ENCODE measurements at regions of chr3 and their contacts with region 1.

Region 1: DNA sequence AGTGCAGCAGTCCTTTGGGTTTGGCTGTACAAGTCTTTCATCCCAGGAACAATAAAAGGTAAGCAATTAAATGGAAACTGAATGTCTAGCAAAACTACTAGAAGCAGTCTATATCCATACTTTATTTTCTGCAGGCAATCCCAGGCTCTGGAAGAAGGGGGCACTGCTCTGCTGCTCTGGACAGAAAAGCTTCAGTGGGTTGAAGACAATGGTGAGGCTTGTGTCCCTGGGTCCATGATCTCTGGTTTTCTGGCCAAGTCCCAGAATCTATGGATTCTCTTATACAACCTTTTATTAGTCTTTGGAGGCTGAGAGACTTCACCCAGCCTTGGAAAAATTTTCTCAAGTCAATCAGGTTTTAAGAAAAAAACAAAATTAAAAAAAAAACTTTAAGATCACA is 35.6 kb downstream of the SCAP start:
- DNase-seq: no peak
- ATAC-seq: no peak
- H3K4me3 ChIP-seq: no peak overlapping the region
- H3K27ac ChIP-seq: no peak overlapping the region
- H3K4me1 ChIP-seq: peaks cover 0 to 24% (median 17%) of the 10 kb centered on the region in 9 donors
- H3K27me3 ChIP-seq: no peaks in the 10 kb centered on the region
- CTCF ChIP-seq: peak in 4 of 9 donors; percentile 13 to 27 (median 19)

Region 2: GRCh38 chr3:47420511-47421484 is 19.3 kb before region 1 on chr3:
- intact Hi-C with region 1: loop called in 1 of 10 experiments (anchors 1 kb)
- DNase-seq: peak; percentile 83 to 88
- ATAC-seq: peak; percentile 66 to 87 (median 79)
- H3K4me3 ChIP-seq: peak overlapping the region in 2 of 10 donors; percentile 6 to 13
- H3K27ac ChIP-seq: peak overlapping the region in 9 of 10 donors; percentile 45 to 87 (median 76)
- H3K4me1 ChIP-seq: peaks cover 10 to 24% (median 16%) of the 10 kb centered on the region in 9 donors
- H3K27me3 ChIP-seq: no peaks in the 10 kb centered on the region
- CTCF ChIP-seq: peak; percentile 76 to 95 (median 89)

Measured in heart right ventricle (tissue), 16 donors.